Activated naive CD4-positive, alpha-beta T cell treated with anti-CD3 and anti-CD28 coated beads for 36 hours (primary cell): ENCODE measurements at regions of chr7 and their contacts with region 1.

Region 1: DNA sequence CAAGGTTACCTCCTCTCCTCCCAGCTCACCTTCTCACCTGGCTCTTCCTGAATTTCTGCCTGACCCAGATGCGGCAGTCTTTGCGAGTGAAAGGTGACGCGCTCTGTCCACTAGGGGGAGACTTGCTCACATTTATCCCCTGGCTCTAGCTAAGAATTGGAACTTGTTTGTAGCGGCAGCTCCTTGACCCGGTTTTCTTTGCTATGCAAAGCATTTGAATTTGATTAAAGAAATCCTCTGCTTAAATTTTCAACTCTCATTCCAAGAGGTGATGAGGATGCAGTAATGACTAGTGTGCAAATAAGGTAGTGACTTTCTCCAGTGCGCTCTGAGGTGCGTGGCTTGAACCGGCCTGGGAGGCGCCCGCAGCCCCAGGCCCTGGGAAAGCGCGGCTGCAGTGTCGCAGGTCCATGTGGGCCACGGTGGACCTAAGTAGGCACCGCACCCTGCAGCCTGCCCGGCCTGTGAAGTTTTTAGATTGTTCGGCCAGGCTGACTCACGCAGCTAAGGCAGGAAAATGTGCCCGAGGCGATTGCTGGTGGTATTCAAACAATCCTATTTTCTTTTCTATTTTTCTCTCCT is 336.9 kb upstream of the NPSR1 start:
- DNase-seq: peak; percentile 61
- H3K4me3 Mint-ChIP-seq: no peak overlapping the region
- H3K27ac Mint-ChIP-seq: no peak overlapping the region
- H3K4me1 Mint-ChIP-seq: peaks cover 3% of the 10 kb centered on the region
- H3K27me3 Mint-ChIP-seq: peaks cover 29% of the 10 kb centered on the region

Region 2: DNA sequence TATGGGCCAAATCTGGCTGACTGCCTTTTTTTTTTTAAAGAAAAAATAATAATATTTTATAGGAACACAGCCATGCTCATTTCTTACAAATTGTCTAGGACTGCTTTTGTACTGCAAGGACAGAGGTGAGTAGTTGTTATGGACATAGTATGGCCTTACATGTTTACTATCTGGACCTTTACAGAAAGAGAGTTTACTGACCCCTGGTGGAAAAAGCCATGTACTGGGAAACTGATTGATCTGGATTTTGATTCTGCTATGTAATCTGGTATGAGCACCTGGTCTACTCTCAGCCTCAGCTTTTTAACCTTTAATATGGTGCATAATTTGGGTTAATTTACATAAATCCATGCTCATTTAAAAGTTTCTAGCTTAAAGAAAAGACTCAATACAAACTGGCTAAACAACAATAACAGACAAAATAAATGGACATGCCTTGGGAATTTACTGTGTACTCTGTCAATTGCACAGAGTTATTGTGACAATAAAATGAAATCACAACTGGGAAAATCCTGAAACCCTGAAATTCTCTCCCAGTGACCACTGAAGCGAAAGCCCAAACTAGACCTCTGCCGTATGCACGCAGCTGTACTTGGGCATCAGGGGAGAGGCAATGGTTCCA is 155.1 kb before region 1 on chr7:
- CTCF ChIA-PET with region 1: no interaction called
- intact Hi-C with region 1: no loop called
- DNase-seq: no peak
- H3K4me3 Mint-ChIP-seq: no peak overlapping the region
- H3K27ac Mint-ChIP-seq: no peak overlapping the region
- H3K4me1 Mint-ChIP-seq: no peaks in the 10 kb centered on the region
- H3K27me3 Mint-ChIP-seq: no peaks in the 10 kb centered on the region

Region 3: GRCh38 chr7:34269084-34269483 is 52.0 kb before region 1 on chr7:
- CTCF ChIA-PET with region 1: no interaction called
- intact Hi-C with region 1: no loop called
- DNase-seq: no peak
- H3K4me3 Mint-ChIP-seq: no peak overlapping the region
- H3K27ac Mint-ChIP-seq: no peak overlapping the region
- H3K4me1 Mint-ChIP-seq: no peaks in the 10 kb centered on the region
- H3K27me3 Mint-ChIP-seq: peaks cover 2% of the 10 kb centered on the region

Region 4: GRCh38 chr7:34296663-34297062 is 24.4 kb before region 1 on chr7:
- CTCF ChIA-PET with region 1: no interaction called
- intact Hi-C with region 1: no loop called
- DNase-seq: no peak
- H3K4me3 Mint-ChIP-seq: no peak overlapping the region
- H3K27ac Mint-ChIP-seq: no peak overlapping the region
- H3K4me1 Mint-ChIP-seq: no peaks in the 10 kb centered on the region
- H3K27me3 Mint-ChIP-seq: peaks cover 7% of the 10 kb centered on the region

Region 5: DNA sequence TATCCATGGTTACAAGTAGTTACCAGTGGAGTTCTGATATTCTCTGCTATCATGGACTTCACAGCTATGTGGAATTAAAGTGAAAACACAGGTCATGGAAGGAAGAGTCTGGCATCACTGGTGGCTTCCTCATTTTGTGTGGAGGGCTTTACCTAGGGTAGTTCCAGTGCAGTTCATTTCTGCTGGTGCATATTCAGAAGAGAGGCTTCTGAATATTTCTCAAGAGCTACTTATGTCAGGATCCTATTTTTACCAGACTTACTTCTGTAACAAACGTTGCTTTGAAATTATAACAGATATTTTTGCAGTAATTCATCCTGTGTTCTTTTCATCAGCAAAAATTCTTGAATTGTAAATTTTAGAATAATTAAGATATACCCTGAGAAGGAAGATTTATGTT is 100.4 kb after region 1 on chr7:
- CTCF ChIA-PET with region 1: no interaction called
- intact Hi-C with region 1: loop called (anchors 5 kb)
- DNase-seq: no peak
- H3K4me3 Mint-ChIP-seq: no peak overlapping the region
- H3K27ac Mint-ChIP-seq: no peak overlapping the region
- H3K4me1 Mint-ChIP-seq: no peaks in the 10 kb centered on the region
- H3K27me3 Mint-ChIP-seq: no peaks in the 10 kb centered on the region

Region 6: DNA sequence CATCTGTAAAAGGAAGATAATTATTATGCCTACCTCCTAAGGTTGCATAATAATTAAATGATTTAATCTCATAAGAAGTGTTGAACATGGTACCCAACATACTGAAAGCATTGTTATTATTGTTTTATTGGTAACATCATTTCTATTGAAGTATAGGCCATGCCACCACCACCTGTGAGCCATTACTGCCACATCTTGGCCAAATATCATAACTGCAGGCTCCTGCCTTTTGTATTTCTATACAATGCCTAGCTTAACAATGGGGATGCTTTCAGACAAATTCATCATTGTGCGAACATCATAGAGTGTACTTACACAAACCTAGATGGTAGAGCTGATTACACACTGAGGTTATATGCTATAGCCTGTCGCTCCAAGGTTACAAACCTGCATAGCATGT is 275.8 kb after region 1 on chr7:
- CTCF ChIA-PET with region 1: interaction called, 4 read pairs
- intact Hi-C with region 1: loop called (anchors 1 kb)
- DNase-seq: no peak
- H3K4me3 Mint-ChIP-seq: no peak overlapping the region
- H3K27ac Mint-ChIP-seq: no peak overlapping the region
- H3K4me1 Mint-ChIP-seq: no peaks in the 10 kb centered on the region
- H3K27me3 Mint-ChIP-seq: no peaks in the 10 kb centered on the region

Region 7: DNA sequence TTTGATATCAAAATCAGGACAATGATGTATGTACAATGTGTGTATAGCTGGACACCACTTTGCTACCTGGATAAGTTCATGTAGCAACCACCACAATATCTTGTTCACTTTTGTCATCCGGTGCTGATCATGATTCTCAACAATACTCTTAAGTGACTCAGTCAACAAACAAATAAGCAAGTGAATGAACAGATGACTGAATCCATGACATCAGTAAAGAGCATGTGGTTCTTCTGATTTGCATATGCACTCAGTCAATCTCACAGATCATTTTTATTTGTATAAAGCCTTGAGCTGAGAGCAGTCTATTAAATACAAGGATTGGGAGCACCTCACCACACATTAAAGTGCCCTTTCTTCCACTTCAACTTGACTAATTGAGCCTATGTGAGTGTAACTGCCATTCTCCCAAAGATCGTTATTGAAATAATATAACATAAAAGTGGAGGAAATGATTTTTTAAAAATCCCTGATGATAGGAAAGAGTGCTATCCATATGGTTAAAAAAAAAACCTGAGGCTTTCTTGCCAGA is 406.4 kb after region 1 on chr7:
- CTCF ChIA-PET with region 1: no interaction called
- intact Hi-C with region 1: loop called (anchors 10 kb)
- DNase-seq: no peak
- H3K4me3 Mint-ChIP-seq: no peak overlapping the region
- H3K27ac Mint-ChIP-seq: no peak overlapping the region
- H3K4me1 Mint-ChIP-seq: peaks cover 13% of the 10 kb centered on the region
- H3K27me3 Mint-ChIP-seq: peaks cover 2% of the 10 kb centered on the region

Region 8: DNA sequence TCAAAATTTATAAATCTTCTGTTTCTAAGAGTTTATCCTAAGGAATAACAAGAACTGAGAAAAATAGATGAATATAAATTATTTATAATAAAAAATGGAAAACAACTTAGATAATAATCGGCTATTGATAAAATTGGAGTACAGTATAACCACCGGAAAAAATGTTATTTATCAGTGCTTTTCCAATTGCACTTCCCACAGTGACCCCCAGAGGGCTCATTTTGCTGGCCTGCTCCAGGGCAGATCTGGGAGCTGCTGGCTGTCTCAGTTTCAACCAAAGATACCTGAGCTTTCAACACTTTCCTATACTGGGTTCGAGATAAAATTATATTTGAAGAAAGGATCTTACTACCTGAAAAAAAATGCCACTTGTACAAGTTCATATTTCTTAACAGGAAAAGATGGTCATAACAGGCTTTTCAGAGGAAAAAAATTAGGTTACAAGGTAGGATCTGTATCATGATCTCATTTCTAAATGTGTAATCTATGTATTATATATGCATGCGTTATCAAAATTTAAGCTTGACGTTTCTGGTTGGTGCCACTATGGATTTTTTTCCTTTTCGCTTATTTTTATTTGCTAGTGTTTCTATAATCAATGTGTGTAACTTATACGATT is 502.7 kb after region 1 on chr7:
- CTCF ChIA-PET with region 1: no interaction called
- intact Hi-C with region 1: loop called (anchors 10 kb)
- DNase-seq: peak; percentile 73
- H3K4me3 Mint-ChIP-seq: no peak overlapping the region
- H3K27ac Mint-ChIP-seq: no peak overlapping the region
- H3K4me1 Mint-ChIP-seq: no peaks in the 10 kb centered on the region
- H3K27me3 Mint-ChIP-seq: peaks cover 4% of the 10 kb centered on the region